Activated CD4-positive, alpha-beta T cell treated with anti-CD3 and anti-CD28 coated beads for 36 hours (primary cell): ENCODE measurements at regions of chr20 and their contacts with region 1.

Region 1: DNA sequence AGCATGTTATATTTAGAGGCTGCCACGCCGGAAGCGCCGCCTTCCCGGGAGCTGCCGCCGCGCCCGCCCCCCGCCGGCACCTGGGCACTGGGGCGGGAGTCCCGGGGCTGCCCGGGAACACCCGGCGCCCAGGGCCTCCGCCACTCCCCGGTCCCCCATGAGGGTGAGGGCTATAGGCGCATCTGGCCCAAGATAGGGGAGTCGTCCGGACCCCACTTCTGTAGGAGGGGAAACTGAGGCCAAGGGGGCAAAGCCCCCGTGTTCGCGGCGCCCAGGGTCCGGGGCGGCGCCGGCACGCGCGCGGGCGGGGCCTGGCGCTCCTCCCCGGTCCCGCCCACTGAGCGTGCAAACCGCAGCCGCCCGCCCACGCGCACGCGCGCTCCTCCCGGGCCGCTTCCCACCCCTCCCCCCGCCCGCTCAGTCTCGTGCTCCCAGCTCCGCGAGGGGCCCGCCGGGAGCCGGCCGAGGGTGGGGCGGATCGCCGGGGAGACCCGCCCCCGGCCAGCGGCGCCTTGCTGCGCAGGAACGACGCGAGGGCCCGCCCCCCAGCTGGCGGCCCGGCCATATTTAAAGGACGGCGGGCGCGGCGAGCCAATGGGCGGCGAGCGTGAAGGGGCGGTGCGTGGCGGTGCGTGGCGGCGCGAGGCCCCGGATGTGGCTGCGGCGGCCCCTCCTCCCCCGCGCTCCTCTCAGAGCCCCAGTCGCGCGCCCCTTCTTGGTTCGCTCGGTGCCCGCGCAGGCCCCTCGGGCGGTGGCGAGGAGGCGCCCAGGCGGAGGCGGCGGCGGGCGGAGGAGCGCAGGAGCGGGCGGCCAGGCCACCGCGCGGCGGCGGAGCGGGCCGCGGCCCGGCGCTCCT is at the start of gene LSM14B:
- DNase-seq: peak; percentile 99
- ATAC-seq: peak; percentile 84
- H3K4me3 Mint-ChIP-seq: peak within 1 kb of the TSS; percentile 80
- H3K27ac Mint-ChIP-seq: peak within 1 kb of the TSS; percentile 91
- H3K4me1 Mint-ChIP-seq: peaks cover 54% of the 10 kb centered on the region
- H3K27me3 Mint-ChIP-seq: no peaks in the 10 kb centered on the region
- total RNA-seq, gene LSM14B: 38.7 TPM

Region 2: DNA sequence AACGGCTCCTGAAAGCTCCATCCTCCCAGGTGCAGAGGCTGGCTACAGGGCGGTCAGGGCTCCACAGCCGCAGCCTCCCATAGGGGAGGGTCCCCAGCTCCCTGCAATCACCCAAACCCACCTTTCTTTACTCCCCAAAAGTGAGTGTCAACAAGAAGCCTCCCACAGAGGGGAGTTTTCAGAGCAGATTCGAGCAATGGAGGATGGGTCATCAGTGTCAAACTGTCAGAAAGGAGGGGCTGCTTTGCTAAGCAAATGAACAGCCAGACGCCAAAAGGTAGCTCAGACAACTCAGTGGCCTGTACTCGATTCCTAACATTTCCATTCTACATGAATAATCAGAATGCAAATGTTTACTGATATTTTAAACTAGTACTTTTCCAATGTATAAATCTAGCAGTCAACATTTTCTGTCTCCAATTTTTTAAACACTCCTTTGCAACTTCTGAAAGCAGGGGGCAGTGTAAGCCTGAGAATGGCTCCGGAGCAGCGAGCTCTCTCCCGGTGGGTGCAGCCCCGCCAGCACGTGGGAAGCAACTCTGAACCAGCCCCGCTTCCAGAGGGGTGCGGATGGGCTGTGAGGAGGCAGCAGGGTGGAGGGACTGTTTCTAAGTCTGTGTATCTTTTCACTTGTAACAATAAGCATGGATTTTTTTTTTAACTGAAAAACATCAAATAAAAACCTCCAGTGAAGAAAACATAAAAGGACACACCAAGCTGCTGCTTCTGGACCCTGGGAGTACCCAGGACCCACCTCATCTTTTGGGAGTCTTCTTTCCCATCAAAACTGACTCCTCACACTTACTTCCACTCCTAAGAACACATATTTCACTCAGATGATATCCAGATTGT is 111.2 kb before region 1 on chr20:
- CTCF ChIA-PET with region 1: interaction called, 4 read pairs
- POLR2A ChIA-PET with region 1: interaction called, 4 read pairs
- intact Hi-C with region 1: loop called in 1 of 2 experiments (anchors 1 kb)
- DNase-seq: peak; percentile 75
- ATAC-seq: peak; percentile 81
- H3K4me3 Mint-ChIP-seq: no peak overlapping the region
- H3K27ac Mint-ChIP-seq: peak overlapping the region; percentile 29
- H3K4me1 Mint-ChIP-seq: peaks cover 3% of the 10 kb centered on the region
- H3K27me3 Mint-ChIP-seq: no peaks in the 10 kb centered on the region

Region 3: DNA sequence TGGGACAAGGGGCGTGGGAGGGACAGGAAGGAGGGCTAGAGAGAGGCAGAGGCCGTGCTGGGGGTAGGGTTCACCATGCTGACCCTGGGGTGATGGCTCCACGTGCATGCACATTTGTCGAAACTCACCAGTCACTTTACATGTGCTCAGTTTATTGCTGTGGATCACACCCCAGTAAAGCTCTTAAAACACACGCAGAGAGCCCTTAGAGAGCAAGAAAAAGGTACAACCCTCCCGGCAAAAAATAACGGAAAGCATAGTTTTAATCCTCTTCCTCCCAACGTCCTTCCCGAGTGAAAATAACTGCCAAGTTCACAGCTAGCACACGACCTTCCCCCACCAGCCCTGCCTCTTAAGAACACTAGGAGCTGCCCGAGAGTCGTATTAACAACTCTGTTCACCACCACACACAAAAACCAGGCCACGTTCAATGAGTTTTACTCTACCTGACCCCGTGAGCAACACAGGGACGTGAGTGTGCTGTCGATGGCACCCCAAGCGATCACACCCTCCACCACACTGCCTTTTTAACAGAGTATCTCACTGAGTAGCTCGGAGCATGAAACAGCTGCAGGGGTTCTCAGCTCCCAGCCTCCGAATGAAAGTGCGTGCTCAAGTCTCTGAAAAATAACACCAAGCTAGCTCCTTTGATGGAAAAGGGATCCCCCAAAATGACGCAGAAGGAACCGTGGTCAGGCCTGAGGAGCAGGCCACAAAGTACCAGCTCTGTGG is 96.0 kb before region 1 on chr20:
- CTCF ChIA-PET with region 1: interaction called, 4 read pairs
- POLR2A ChIA-PET with region 1: no interaction called
- intact Hi-C with region 1: loop called (anchors 2 to 5 kb)
- DNase-seq: peak; percentile 45
- ATAC-seq: peak; percentile 81
- H3K4me3 Mint-ChIP-seq: no peak overlapping the region
- H3K27ac Mint-ChIP-seq: peak overlapping the region; percentile 22
- H3K4me1 Mint-ChIP-seq: peaks cover 54% of the 10 kb centered on the region
- H3K27me3 Mint-ChIP-seq: no peaks in the 10 kb centered on the region

Region 4: GRCh38 chr20:62156592-62157386 is 34.8 kb after region 1 on chr20:
- CTCF ChIA-PET with region 1: no interaction called
- POLR2A ChIA-PET with region 1: no interaction called
- intact Hi-C with region 1: loop called in 1 of 2 experiments (anchors 1 kb)
- DNase-seq: peak; percentile 86
- ATAC-seq: peak; percentile 85
- H3K4me3 Mint-ChIP-seq: no peak overlapping the region
- H3K27ac Mint-ChIP-seq: no peak overlapping the region
- H3K4me1 Mint-ChIP-seq: peaks cover 15% of the 10 kb centered on the region
- H3K27me3 Mint-ChIP-seq: no peaks in the 10 kb centered on the region

Region 5: GRCh38 chr20:62182613-62183425 is 60.8 kb after region 1 on chr20 and contains the start of gene MTG2:
- CTCF ChIA-PET with region 1: interaction called, 3 read pairs
- POLR2A ChIA-PET with region 1: no interaction called
- intact Hi-C with region 1: loop called in 1 of 2 experiments (anchors 1 kb)
- DNase-seq: peak; percentile 97
- ATAC-seq: peak; percentile 99
- H3K4me3 Mint-ChIP-seq: peak within 1 kb of the TSS; percentile 88
- H3K27ac Mint-ChIP-seq: peak within 1 kb of the TSS; percentile 87
- H3K4me1 Mint-ChIP-seq: peaks cover 39% of the 10 kb centered on the region
- H3K27me3 Mint-ChIP-seq: no peaks in the 10 kb centered on the region
- total RNA-seq, gene MTG2: 38.0 to 44.9 TPM

Region 6: GRCh38 chr20:62208880-62209755 is 87.1 kb after region 1 on chr20:
- CTCF ChIA-PET with region 1: no interaction called
- POLR2A ChIA-PET with region 1: no interaction called
- intact Hi-C with region 1: no loop called
- DNase-seq: no peak
- ATAC-seq: no peak
- H3K4me3 Mint-ChIP-seq: no peak overlapping the region
- H3K27ac Mint-ChIP-seq: no peak overlapping the region
- H3K4me1 Mint-ChIP-seq: no peaks in the 10 kb centered on the region
- H3K27me3 Mint-ChIP-seq: peaks cover 2% of the 10 kb centered on the region

Region 7: DNA sequence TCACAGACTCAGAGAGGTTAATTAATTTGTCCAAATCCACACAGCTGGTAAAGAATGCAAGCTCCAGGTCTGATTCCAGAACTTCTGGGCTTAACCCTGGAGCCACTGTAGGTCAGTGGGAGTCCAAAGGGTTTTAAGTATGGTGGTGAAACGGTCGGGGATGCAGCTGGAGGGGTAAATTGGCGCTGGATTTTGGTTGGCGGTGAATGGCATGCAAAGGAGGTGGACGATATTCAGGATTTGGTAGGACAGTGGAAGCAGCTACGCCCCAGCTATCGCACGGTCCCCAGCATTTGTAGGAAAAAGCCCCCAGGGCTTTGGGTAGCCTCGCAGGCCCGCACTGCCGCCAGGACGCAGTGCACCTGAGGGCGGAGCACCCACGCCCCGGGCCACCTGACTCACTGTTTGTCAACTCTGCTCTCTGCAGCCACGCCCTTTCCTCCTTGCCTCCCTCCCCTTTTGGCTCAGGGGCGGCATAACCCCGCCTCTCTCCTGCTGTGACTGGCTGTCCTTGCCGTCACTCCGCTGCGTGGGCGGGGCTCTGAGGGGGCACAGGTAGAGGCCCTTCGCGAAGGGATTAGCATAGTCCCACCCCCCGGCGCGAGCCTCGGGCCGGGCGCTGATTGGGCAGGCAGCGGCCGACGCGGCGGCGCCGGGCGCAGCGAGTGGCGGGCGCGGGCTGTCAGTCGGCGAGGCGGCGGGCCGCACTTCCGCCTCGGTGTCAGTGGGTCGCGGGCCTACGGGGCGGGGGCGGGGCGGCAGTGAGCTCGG is 116.0 kb after region 1 on chr20 and contains the start of gene OSBPL2:
- CTCF ChIA-PET with region 1: no interaction called
- POLR2A ChIA-PET with region 1: no interaction called
- intact Hi-C with region 1: loop called (anchors 1 kb)
- DNase-seq: peak; percentile 100
- ATAC-seq: peak; percentile 99
- H3K4me3 Mint-ChIP-seq: peak within 1 kb of the TSS; percentile 77
- H3K27ac Mint-ChIP-seq: peak within 1 kb of the TSS; percentile 74
- H3K4me1 Mint-ChIP-seq: peaks cover 34% of the 10 kb centered on the region
- H3K27me3 Mint-ChIP-seq: no peaks in the 10 kb centered on the region
- total RNA-seq, gene OSBPL2: 19.2 to 23.0 TPM

Region 8: DNA sequence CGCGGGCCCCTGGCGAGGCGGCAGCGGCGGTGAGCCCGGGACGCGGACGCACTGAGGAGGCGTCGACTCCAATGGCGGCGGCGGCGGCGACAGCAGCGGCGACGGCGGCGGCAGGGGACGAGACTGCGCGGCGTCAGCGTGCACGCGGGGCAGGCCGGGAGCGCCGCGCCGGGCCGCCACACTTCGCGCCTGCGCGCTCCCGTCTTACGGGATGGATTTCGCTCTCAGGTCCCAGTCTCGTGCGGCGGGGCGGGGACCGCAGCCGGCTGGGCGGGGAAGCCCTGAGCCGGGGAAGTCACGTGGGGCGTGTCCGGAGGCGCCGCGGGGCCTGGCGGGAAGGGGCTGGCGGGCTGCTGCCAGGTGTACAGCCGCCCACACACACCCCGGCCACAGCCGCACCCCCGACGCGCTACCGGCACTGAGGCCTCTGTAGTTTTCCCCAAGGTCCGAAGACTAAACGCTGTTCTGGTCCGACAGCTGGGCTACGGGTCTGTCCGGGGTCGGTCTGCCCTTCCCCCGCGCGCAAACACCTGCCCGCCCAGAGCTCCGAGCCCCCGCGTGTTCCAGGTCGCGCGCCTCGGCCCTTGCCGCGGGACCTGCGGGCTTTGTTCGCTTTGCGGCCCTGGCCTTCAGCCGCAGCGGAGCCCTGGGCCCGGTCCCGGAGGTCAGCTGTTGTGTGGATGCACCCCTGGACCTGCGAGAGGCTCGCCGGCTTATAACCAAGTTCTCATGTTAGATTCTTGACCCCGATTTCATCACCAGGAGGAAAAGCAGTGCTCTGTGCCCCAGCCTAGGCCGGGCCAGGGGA is 1094.2 kb after region 1 on chr20 and contains the start of gene YTHDF1:
- CTCF ChIA-PET with region 1: no interaction called
- POLR2A ChIA-PET with region 1: no interaction called
- intact Hi-C with region 1: loop called in 1 of 2 experiments (anchors 5 kb)
- DNase-seq: peak; percentile 98
- ATAC-seq: peak; percentile 98
- H3K4me3 Mint-ChIP-seq: peak within 1 kb of the TSS; percentile 92
- H3K27ac Mint-ChIP-seq: peak within 1 kb of the TSS; percentile 88
- H3K4me1 Mint-ChIP-seq: peaks cover 43% of the 10 kb centered on the region
- H3K27me3 Mint-ChIP-seq: peaks cover 4% of the 10 kb centered on the region
- total RNA-seq, gene YTHDF1: 32.2 to 32.6 TPM